Tibial artery (tissue), 4 donors: ENCODE measurements at regions of chr12 and their contacts with region 1.

Region 1: GRCh38 chr12:131167334-131167733 is 213.6 kb downstream of the ADGRD1 start:
- DNase-seq: no peak
- H3K4me3 ChIP-seq: no peak overlapping the region
- H3K27ac ChIP-seq: no peak overlapping the region
- H3K4me1 ChIP-seq: no peaks in the 10 kb centered on the region
- H3K27me3 ChIP-seq: peaks cover 0 to 21% of the 10 kb centered on the region in 2 donors
- CTCF ChIP-seq: no peak

Region 2: GRCh38 chr12:131222256-131223139 is 55.2 kb after region 1 on chr12:
- intact Hi-C with region 1: no loop called
- DNase-seq: peak in 1 of 2 donors; percentile 53
- H3K4me3 ChIP-seq: no peak overlapping the region
- H3K27ac ChIP-seq: no peak overlapping the region
- H3K4me1 ChIP-seq: peaks cover 0 to 13% (median 8%) of the 10 kb centered on the region in 4 donors
- H3K27me3 ChIP-seq: peaks cover 0 to 50% of the 10 kb centered on the region in 2 donors
- CTCF ChIP-seq: no peak

Region 3: GRCh38 chr12:132268674-132269073 is 1101.3 kb after region 1 on chr12:
- intact Hi-C with region 1: loop called (anchors 10 kb)
- DNase-seq: no peak
- H3K4me3 ChIP-seq: no peak overlapping the region
- H3K27ac ChIP-seq: no peak overlapping the region
- H3K4me1 ChIP-seq: no peaks in the 10 kb centered on the region
- H3K27me3 ChIP-seq: peaks cover 0 to 74% of the 10 kb centered on the region in 2 donors
- CTCF ChIP-seq: no peak